IMR-90 (cell line): ENCODE measurements at regions of chr1 and their contacts with region 1.

Region 1: DNA sequence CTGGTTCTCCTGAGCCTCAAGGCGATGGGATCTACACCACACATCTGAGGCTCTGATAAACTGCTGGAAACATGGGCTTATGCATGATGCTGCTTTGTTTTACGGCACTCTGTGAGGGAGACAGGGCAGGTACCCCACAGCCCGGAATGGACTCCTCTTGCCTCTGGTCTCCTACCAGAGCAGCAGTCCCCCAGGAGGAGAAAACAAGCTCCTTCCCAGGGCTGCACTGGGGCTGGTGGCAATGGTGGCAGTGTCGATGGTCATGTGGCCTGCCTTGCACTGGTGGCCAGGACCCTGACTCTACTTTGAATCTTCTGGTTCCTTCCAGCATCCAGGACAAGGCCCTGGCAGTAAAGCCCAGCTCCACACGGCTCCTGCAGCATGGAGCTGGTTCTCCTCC is 79.4 kb downstream of the TOMM20 start:
- DNase-seq: no peak
- ATAC-seq: no peak
- H3K4me3 ChIP-seq: no peak overlapping the region
- H3K27ac ChIP-seq: peak overlapping the region; percentile 86
- H3K4me1 ChIP-seq: peaks cover 25% of the 10 kb centered on the region
- H3K27me3 ChIP-seq: no peaks in the 10 kb centered on the region
- CTCF ChIP-seq: no peak
- POLR2A ChIP-seq: no peak
- RAD21 ChIP-seq: no peak

Region 2: DNA sequence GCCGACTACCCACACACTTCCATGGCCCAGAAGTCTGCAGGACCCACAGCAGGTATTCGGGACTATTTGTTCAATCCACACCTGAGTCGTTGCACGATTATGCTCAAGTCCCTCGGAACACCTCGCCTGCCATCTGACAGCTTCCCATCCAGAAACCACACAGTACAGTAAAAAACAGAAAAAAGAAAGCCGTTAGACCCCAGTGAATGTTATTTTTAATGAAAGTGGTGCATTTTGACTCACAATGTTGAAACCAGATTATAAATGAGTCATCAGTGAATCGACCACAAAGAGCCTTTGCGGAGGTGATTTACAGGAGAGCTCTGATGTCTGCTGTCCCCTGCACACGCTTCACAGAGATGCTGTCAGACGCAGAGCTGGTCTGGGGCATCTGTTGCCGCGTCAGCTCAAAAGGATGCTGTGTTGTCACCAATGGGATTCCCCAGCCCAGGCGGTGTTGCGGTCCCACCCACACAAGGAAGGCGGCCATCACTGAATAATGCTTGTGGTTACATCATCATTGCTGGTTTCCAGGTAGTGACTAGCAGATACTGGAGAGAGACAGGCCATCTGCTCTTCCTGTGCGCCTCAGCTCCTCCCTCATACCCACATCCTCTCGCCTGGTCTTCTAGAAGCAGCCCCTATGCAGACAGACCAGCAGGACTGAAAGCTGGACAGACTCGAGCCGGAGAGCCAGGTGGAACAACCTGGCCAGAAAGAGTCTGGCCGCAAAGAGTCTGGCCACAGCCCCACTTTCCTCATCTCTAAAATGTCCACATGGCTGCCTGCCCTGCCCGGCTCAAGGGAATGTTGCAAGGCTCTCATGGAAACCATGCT is 37.4 kb before region 1 on chr1:
- CTCF ChIA-PET with region 1: no interaction called
- POLR2A ChIA-PET with region 1: no interaction called
- dilution Hi-C with region 1: no loop called
- in situ Hi-C with region 1: no loop called
- intact Hi-C with region 1: no loop called
- DNase-seq: peak; percentile 100
- ATAC-seq: peak; percentile 98
- H3K4me3 ChIP-seq: no peak overlapping the region
- H3K27ac ChIP-seq: peak overlapping the region; percentile 74
- H3K4me1 ChIP-seq: peaks cover 10% of the 10 kb centered on the region
- H3K27me3 ChIP-seq: no peaks in the 10 kb centered on the region
- CTCF ChIP-seq: no peak
- POLR2A ChIP-seq: peak; percentile 63
- RAD21 ChIP-seq: peak; percentile 42

Region 3: DNA sequence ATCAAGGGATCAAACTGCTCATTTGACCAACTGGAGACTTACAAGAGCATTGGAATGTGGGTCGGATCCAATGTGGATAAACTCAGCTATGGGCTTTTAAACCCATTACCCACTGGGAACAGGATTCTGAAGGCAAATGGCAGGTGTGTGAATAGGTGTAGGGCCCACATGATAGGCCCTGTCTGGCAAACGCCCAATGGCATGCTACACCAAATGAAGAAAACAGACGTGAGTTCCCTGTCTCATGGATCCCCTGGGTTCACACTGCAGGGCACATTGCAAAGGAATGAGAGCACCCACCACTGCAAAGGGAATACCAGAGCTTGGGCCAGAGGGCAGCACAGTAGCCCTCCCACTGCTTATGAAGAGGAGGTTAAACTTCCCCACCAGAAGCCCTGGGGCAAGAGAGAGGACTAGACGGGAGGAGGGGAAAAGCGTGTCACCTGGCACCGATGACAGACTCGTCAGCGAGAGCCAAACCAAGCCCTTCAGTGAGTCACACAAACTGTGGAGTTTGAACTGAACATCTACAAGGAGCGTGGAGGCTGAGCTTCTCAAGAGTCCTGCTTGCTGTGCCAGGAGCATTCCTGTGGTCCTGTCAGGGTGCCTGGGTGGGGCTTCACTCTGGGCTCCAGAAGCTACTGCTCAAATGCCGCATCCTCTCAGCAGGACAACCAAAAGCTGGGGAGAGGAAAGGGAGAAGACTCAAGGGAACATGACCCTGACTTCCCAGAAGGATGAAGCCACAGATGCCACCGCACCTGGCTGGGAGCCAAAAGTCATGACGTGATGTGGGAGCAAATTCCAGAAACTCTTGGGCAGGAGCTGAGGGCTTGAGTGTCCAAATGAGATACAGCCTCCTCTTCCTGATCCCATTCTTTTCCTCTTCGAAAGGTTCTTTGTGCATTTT is 18.3 kb after region 1 on chr1:
- CTCF ChIA-PET with region 1: no interaction called
- POLR2A ChIA-PET with region 1: no interaction called
- dilution Hi-C with region 1: no loop called
- in situ Hi-C with region 1: no loop called
- intact Hi-C with region 1: loop called (anchors 2 kb)
- DNase-seq: peak; percentile 99
- ATAC-seq: peak; percentile 93
- H3K4me3 ChIP-seq: no peak overlapping the region
- H3K27ac ChIP-seq: peak overlapping the region; percentile 15
- H3K4me1 ChIP-seq: peaks cover 23% of the 10 kb centered on the region
- H3K27me3 ChIP-seq: no peaks in the 10 kb centered on the region
- CTCF ChIP-seq: no peak
- POLR2A ChIP-seq: no peak; the same call in 1 of the 2 replicates
- RAD21 ChIP-seq: peak; percentile 22